SK-N-SH (cell line): ENCODE measurements at regions of chr22 and their contacts with region 1.

Region 1: GRCh38 chr22:42868751-42869251 is 11.7 kb upstream of the ARFGAP3 start:
- DNase-seq: no peak
- H3K4me3 ChIP-seq: no peak overlapping the region
- H3K27ac ChIP-seq: no peak overlapping the region
- H3K4me1 ChIP-seq: peaks cover 0 to 2% of the 10 kb centered on the region in 2 experiments; a peak in 1 of 4 replicates
- H3K27me3 ChIP-seq: no peaks in the 10 kb centered on the region
- CTCF ChIP-seq: no peak
- EP300 ChIP-seq: no peak
- RAD21 ChIP-seq: no peak

Region 2: GRCh38 chr22:42794551-42795510 is 74.0 kb before region 1 on chr22:
- CTCF ChIA-PET with region 1: no interaction called
- POLR2A ChIA-PET with region 1: no interaction called
- DNase-seq: no peak
- H3K4me3 ChIP-seq: no peak overlapping the region
- H3K27ac ChIP-seq: no peak overlapping the region
- H3K4me1 ChIP-seq: no peaks in the 10 kb centered on the region
- H3K27me3 ChIP-seq: no peaks in the 10 kb centered on the region
- CTCF ChIP-seq: no peak
- EP300 ChIP-seq: no peak
- RAD21 ChIP-seq: no peak

Region 3: GRCh38 chr22:42811459-42811858 is 57.3 kb before region 1 on chr22:
- CTCF ChIA-PET with region 1: no interaction called
- POLR2A ChIA-PET with region 1: no interaction called
- DNase-seq: no peak
- H3K4me3 ChIP-seq: no peak overlapping the region
- H3K27ac ChIP-seq: no peak overlapping the region
- H3K4me1 ChIP-seq: peaks cover 0 to under 1% of the 10 kb centered on the region in 2 experiments; a peak in 1 of 4 replicates
- H3K27me3 ChIP-seq: no peaks in the 10 kb centered on the region
- CTCF ChIP-seq: no peak
- EP300 ChIP-seq: no peak
- RAD21 ChIP-seq: no peak

Region 4: DNA sequence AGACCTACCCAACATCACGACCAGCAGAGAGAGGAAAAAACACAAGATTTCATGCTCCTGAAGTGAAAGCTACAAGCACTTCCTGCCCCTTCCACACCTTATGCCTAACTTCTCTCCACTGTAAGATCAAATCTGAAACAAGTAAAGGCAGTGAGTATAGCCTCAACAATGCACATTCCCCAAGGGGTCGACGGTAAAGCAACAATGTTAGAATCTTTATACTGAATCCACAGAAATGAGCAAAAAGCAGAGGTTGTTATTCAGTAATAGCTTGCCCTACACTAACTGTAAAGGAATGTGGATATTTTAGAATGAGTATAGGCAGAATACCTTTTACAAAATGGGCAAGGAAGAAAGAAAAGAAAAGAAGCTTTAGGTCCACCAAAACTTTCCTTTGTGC is 27.4 kb before region 1 on chr22:
- CTCF ChIA-PET with region 1: no interaction called
- POLR2A ChIA-PET with region 1: no interaction called
- DNase-seq: no peak
- H3K4me3 ChIP-seq: no peak overlapping the region
- H3K27ac ChIP-seq: peak overlapping the region in 1 of 2 experiments; percentile 42; a peak in 2 of 4 replicates
- H3K4me1 ChIP-seq: no peaks in the 10 kb centered on the region
- H3K27me3 ChIP-seq: no peaks in the 10 kb centered on the region
- CTCF ChIP-seq: no peak
- EP300 ChIP-seq: no peak
- RAD21 ChIP-seq: no peak

Region 5: DNA sequence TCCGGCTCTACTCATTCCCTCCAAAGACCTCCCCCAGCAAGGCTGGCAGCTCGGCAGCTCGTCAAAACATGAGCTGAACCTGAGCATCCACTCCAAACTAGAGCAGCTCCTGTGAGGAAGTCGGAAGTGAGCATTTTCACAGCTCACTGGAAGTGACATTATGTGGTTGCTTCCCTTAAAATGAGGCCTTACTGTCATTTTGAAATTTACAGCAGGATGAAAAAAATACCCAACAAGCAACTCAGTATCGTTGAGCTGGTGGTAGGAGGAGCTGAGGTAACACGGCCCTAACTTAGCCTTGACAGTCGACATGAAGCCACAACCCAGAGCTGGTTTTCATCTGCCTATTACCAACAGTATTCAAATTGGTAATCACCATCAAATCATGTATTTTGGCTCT is 26.3 kb after region 1 on chr22:
- CTCF ChIA-PET with region 1: interaction called, 10 read pairs
- POLR2A ChIA-PET with region 1: no interaction called
- DNase-seq: no peak
- H3K4me3 ChIP-seq: no peak overlapping the region
- H3K27ac ChIP-seq: no peak overlapping the region
- H3K4me1 ChIP-seq: no peaks in the 10 kb centered on the region
- H3K27me3 ChIP-seq: no peaks in the 10 kb centered on the region
- CTCF ChIP-seq: no peak
- EP300 ChIP-seq: no peak
- RAD21 ChIP-seq: no peak